ENCODE measurements at regions of chr15 and their contacts with region 1.

Region 1: GRCh38 chr15:84987949-84988624 is 6.4 kb downstream of the PDE8A start:
- DNase-seq: no peak
- H3K4me3 ChIP-seq: no peak overlapping the region
- H3K27ac ChIP-seq: no peak overlapping the region
- H3K4me1 ChIP-seq: peaks cover 10% of the 10 kb centered on the region
- H3K27me3 ChIP-seq: no peaks in the 10 kb centered on the region
- CTCF ChIP-seq: no peak
- POLR2A ChIP-seq: no peak

Region 2: DNA sequence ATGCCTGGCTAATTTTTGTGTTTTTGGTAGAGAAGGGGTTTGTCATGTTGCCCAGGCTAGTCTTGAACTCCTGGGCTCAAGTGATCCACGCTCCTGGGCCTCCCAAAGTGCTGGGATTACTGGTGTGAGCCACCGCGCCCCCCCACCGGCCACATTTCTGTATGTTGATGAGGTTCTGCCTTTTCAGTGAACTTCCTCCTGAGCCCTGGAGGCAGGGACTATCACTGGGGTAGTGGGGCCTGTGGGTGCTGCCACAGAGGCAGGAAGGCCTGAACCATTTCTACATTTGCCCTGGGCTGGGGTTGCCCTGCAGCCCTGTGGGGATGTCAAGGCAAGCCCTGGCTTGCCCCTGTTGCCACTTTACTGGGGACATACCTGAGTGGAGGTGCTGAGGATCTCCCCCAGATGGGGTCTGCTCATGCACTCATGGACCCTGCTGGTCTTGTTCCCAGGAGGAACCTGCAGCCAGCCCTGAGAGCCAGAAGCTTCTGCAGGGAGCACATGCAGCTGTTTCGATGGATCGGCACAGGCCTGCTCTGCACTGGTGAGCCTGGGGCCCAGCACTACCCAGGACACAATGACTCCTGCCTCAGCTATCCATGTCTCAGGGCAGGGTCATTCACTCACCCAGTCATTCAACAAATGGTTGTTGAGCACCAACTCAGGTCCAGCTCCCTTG is 98.0 kb before region 1 on chr15:
- CTCF ChIA-PET with region 1: no interaction called
- POLR2A ChIA-PET with region 1: no interaction called
- dilution Hi-C with region 1: no loop called
- intact Hi-C with region 1: no loop called
- DNase-seq: no peak
- H3K4me3 ChIP-seq: no peak overlapping the region
- H3K27ac ChIP-seq: no peak overlapping the region
- H3K4me1 ChIP-seq: no peaks in the 10 kb centered on the region
- H3K27me3 ChIP-seq: no peaks in the 10 kb centered on the region
- CTCF ChIP-seq: no peak
- POLR2A ChIP-seq: no peak

Region 3: GRCh38 chr15:85005319-85005718 is 17.2 kb after region 1 on chr15:
- CTCF ChIA-PET with region 1: interaction called, 19 read pairs
- POLR2A ChIA-PET with region 1: no interaction called
- dilution Hi-C with region 1: no loop called
- intact Hi-C with region 1: no loop called
- DNase-seq: no peak
- H3K4me3 ChIP-seq: no peak overlapping the region
- H3K27ac ChIP-seq: no peak overlapping the region
- H3K4me1 ChIP-seq: peaks cover 11% of the 10 kb centered on the region
- H3K27me3 ChIP-seq: no peaks in the 10 kb centered on the region
- CTCF ChIP-seq: peak in 1 of 2 donors; percentile 4
- POLR2A ChIP-seq: no peak

Measured in endothelial cell of umbilical vein (primary cell).